HepG2 (cell line): ENCODE measurements at regions of chr16 and their contacts with region 1.

Region 1: GRCh38 chr16:78925083-78925767 is 675.3 kb downstream of the MAF start:
- DNase-seq: peak; percentile 24
- ATAC-seq: peak; percentile 95
- H3K4me3 ChIP-seq: no peak overlapping the region
- H3K27ac ChIP-seq: no peak overlapping the region
- H3K4me1 ChIP-seq: peaks cover 6% of the 10 kb centered on the region; the same call in 1 of the 2 replicates
- H3K27me3 ChIP-seq: no peaks in the 10 kb centered on the region
- CTCF ChIP-seq: peak; percentile 63
- EP300 ChIP-seq: no peak
- POLR2A ChIP-seq: no peak
- RAD21 ChIP-seq: peak; percentile 59; the same call in 1 of the 2 replicates

Region 2: DNA sequence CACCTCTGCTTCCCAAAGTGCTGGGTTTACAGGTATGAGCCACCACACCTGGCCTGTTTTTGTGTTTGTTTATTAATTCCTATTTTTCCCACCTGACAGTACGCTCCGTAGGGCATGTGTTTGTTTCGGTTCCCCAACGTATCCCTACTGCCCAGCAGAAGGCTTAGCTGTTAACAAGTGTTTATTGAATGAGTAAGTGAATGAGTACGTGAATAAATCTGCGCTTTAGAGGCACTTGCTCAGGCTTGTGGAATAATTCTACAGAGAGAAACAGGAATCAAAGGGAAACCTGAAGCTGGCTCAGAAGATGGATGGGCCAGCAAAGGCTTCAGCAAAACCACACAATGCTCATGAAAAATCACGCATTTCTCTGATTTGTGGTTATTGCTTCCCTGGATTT is 27.4 kb after region 1 on chr16:
- CTCF ChIA-PET with region 1: no interaction called
- POLR2A ChIA-PET with region 1: no interaction called
- in situ Hi-C with region 1: no loop called
- intact Hi-C with region 1: no loop called
- DNase-seq: no peak
- ATAC-seq: no peak
- H3K4me3 ChIP-seq: no peak overlapping the region
- H3K27ac ChIP-seq: no peak overlapping the region
- H3K4me1 ChIP-seq: no peaks in the 10 kb centered on the region
- H3K27me3 ChIP-seq: no peaks in the 10 kb centered on the region
- CTCF ChIP-seq: no peak
- EP300 ChIP-seq: no peak
- POLR2A ChIP-seq: no peak
- RAD21 ChIP-seq: no peak

Region 3: GRCh38 chr16:79047229-79047983 is 122.2 kb after region 1 on chr16:
- CTCF ChIA-PET with region 1: interaction called, 8 read pairs
- POLR2A ChIA-PET with region 1: no interaction called
- in situ Hi-C with region 1: no loop called
- intact Hi-C with region 1: loop called (anchors 1 kb)
- DNase-seq: peak; percentile 29
- ATAC-seq: peak; percentile 80
- H3K4me3 ChIP-seq: no peak overlapping the region
- H3K27ac ChIP-seq: no peak overlapping the region
- H3K4me1 ChIP-seq: no peaks in the 10 kb centered on the region
- H3K27me3 ChIP-seq: no peaks in the 10 kb centered on the region
- CTCF ChIP-seq: peak; percentile 60
- EP300 ChIP-seq: no peak
- POLR2A ChIP-seq: no peak
- RAD21 ChIP-seq: peak; percentile 35; the same call in 1 of the 2 replicates